ENCODE measurements at regions of chr2 and their contacts with region 1.

Region 1: DNA sequence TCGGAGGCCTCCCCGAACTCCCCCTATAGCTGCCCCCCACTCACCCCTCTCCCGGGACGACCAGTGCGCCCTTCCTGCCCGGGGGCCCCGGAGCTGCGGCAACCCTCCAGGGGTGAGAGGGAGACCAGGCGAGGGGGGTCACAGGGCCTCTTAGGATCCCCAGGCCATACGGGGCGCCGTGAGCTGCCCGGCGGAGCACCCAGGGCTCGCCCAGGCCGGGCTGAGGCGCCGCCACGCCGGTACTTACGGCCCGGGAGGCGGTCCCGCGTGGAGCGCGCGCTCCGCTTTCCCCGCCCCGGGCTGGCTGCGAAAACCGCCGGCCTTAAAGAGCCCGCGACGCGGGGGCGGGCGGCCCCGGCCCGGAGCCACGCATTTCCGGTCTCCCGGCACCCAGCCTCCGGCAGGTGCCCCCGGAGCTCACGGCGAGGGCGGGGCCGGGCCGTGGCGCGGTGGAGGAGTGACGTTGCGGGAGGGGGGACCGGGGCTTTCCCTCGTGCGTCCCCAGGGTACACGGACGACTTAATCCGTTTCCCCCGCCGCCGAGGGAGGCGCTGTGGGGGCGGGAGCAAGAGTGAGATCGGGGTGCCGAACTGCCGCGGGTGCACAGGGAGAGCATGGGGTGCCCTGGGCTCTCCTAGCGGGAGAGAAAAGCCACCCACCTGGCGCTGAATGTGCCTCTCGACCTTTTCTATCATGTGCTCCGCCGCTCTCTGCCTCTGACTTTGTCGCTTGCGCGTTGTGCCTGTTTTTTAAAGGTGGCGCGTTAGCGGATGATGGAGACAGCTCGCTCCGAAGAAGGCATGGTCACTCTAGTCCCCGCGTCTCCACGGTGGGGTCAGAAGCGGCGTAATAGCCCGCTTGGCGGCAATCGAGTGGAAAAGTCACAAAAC is at the start of gene METTL21A:
- DNase-seq: peak; percentile 94
- ATAC-seq: peak; percentile 96
- total RNA-seq, gene METTL21A: 14.7 TPM

Region 2: DNA sequence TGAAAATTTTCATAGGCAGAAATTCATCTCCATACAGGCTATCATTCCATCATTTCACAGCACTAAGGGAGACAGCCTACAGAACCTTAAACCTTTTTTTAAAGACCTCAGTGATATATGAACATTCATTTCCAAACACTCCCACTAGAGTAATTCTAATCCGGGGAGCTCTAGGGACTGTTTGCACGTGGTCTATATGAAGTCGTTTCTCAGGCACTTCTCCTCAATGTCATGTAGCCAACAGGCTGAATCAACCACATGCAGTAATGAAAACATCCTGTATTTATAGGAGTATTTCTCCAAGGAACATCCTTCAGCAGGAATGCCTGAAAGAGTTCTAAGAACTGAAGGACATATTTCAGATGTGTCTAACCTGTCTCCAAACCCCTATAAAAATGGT is 192.8 kb before region 1 on chr2:
- intact Hi-C with region 1: no loop called
- DNase-seq: no peak
- ATAC-seq: no peak

Region 3: GRCh38 chr2:207503234-207503633 is 122.0 kb before region 1 on chr2:
- intact Hi-C with region 1: no loop called
- DNase-seq: no peak
- ATAC-seq: peak; percentile 67

Region 4: GRCh38 chr2:207710814-207711740 is 85.8 kb after region 1 on chr2 and contains the start of gene CCNYL1:
- intact Hi-C with region 1: loop called (anchors 1 kb)
- DNase-seq: peak; percentile 99
- ATAC-seq: peak; percentile 100
- total RNA-seq, gene CCNYL1: 10.2 TPM

Region 5: GRCh38 chr2:207734264-207734635 is 109.0 kb after region 1 on chr2:
- intact Hi-C with region 1: loop called (anchors 5 kb)
- DNase-seq: no peak
- ATAC-seq: no peak

Region 6: GRCh38 chr2:207750345-207750744 is 125.1 kb after region 1 on chr2:
- intact Hi-C with region 1: no loop called
- DNase-seq: no peak
- ATAC-seq: no peak

Region 7: DNA sequence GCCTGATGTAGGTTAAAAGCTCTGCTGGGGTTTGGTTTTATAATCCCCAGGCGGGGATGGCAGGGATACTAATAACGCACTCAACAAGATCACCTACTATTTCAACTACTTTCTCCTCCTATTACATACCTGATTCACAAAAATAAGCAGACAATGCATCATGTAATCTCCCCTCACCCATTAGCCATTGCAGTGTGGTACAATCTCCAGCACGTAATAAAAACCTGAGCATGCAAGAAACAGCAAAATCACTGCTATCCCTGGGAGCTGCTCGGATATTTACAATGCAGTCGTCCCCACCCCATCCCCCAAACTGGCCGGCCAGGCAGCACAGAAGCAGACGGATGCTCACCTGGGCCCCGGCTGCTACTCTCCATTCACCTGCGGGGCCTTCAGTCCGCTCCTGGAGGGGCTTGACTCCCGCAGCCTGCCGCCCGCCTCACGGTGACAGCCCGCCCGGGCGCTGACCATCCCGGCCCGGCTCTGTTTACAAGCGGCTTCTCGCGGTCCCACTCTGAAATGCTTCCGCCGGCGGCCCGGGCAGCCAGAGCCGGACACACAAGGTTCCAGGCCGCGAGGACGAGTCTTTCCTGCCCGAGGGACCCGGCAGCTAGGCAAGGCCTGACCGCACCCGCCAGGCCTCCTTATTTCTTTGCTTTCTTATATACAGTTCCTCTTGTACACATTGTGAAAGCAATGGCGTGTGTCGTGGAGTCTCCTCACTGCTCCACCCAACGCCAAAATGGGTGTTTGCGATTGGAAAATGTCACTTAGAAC is 400.0 kb after region 1 on chr2 and contains the start of gene PLEKHM3:
- intact Hi-C with region 1: loop called (anchors 5 kb)
- DNase-seq: peak; percentile 96
- ATAC-seq: peak; percentile 96
- total RNA-seq, gene PLEKHM3: 13.6 TPM

Region 8: DNA sequence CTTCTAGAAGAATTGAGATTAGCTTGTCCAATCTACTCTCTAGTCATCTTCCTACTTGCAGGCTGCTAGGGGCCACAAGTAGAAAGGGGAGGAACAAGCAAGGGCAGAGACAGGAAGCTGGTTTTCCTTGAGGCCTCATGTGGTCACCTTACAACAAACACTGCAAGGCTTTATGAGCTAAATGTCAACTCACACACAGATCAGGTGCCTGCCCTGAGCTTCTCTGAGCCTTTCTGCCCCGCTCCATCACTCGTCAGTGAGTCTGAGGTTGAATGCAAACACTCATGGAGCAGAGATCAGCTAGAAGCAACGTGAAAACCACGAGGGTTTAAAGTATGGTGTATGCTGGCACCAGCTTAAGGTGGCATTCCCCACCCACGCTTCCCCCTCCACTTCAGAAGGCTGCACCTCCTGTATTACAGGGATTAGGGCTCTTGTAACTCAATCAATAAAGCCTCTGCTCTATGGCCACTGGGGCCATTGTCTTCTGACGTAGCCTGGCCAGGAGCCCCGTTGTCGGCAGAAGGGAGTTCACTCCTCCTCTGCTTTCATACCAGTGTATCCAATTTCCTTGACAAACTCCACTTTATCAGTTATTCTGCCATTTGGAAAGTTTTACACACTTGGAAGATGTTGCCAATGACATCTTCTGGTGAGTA is 509.8 kb after region 1 on chr2:
- intact Hi-C with region 1: no loop called
- DNase-seq: no peak
- ATAC-seq: no peak

Measured in Right ventricle myocardium inferior (tissue), 1 donor.